ENCODE measurements at regions of chr3 and their contacts with region 1.

Region 1: GRCh38 chr3:70108072-70108471 is 108.5 kb downstream of the SAMMSON start:
- DNase-seq: peak; percentile 34
- H3K4me3 Mint-ChIP-seq: no peak overlapping the region
- H3K27ac Mint-ChIP-seq: no peak overlapping the region
- H3K4me1 Mint-ChIP-seq: no peaks in the 10 kb centered on the region
- H3K27me3 Mint-ChIP-seq: peaks cover 13% of the 10 kb centered on the region
- CTCF ChIP-seq: peak; percentile 45

Region 2: DNA sequence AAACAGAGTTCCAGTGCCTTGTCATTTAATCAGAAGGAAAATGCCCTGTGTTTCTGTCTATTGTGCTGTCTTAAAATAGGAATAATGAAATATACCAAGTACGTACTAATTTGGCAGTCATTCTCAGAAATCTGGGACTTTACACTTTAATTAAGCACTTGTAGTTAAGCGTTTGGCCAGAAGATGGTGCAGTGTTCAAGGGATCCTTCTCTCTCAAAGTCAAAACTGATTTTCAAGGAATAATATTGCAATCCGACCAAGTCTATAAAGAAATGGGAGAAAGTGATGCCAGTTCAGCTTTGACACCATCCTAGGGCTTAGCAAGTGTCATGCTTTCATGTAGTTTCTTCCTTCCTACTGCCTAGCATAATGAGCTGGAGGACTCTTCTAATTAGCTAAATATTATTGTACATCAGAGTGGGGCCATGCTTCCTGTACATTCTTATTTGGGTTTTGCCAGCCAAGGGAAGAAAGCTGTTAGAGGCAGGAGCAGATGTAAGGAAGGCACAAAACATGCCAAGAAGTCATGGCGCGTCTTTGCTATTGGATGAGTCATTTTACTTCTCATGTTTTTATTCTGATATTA is 43.8 kb before region 1 on chr3:
- CTCF ChIA-PET with region 1: no interaction called
- intact Hi-C with region 1: loop called (anchors 5 kb)
- DNase-seq: peak; percentile 42
- H3K4me3 Mint-ChIP-seq: no peak overlapping the region
- H3K27ac Mint-ChIP-seq: no peak overlapping the region
- H3K4me1 Mint-ChIP-seq: no peaks in the 10 kb centered on the region
- H3K27me3 Mint-ChIP-seq: peaks cover 24% of the 10 kb centered on the region
- CTCF ChIP-seq: peak; percentile 35

Region 3: GRCh38 chr3:70476174-70476573 is 368.1 kb after region 1 on chr3:
- CTCF ChIA-PET with region 1: no interaction called
- intact Hi-C with region 1: no loop called
- DNase-seq: no peak
- H3K4me3 Mint-ChIP-seq: no peak overlapping the region
- H3K27ac Mint-ChIP-seq: no peak overlapping the region
- H3K4me1 Mint-ChIP-seq: no peaks in the 10 kb centered on the region
- H3K27me3 Mint-ChIP-seq: no peaks in the 10 kb centered on the region
- CTCF ChIP-seq: no peak